Aorta (tissue), 5 donors: ENCODE measurements at regions of chr6 and their contacts with region 1.

Region 1: GRCh38 chr6:28218271-28219248 is 6.5 kb upstream of the ZSCAN9 start:
- DNase-seq: peak; percentile 88 to 93
- ATAC-seq: peak; percentile 85
- H3K4me3 ChIP-seq: peak overlapping the region; percentile 72 to 86
- H3K27ac ChIP-seq: no peak overlapping the region
- H3K4me1 ChIP-seq: no peaks in the 10 kb centered on the region
- H3K27me3 ChIP-seq: no peaks in the 10 kb centered on the region

Region 2: GRCh38 chr6:28136585-28137504 is 81.7 kb before region 1 on chr6:
- intact Hi-C with region 1: loop called (anchors 5 to 10 kb)
- DNase-seq: peak; percentile 94 to 96
- ATAC-seq: peak; percentile 94
- H3K4me3 ChIP-seq: peak overlapping the region; percentile 88 to 91
- H3K27ac ChIP-seq: peak overlapping the region; percentile 91 to 99
- H3K4me1 ChIP-seq: no peaks in the 10 kb centered on the region
- H3K27me3 ChIP-seq: no peaks in the 10 kb centered on the region

Region 3: GRCh38 chr6:28252009-28252975 is 33.7 kb after region 1 on chr6 and contains the start of gene ZKSCAN4:
- intact Hi-C with region 1: loop called in 1 of 2 experiments (anchors 5 kb)
- DNase-seq: peak; percentile 84 to 85
- ATAC-seq: peak; percentile 95
- H3K4me3 ChIP-seq: peak within 1 kb of the TSS; percentile 87 to 98
- H3K27ac ChIP-seq: no peak within 1 kb of the TSS
- H3K4me1 ChIP-seq: no peaks in the 10 kb centered on the region
- H3K27me3 ChIP-seq: no peaks in the 10 kb centered on the region
- total RNA-seq, gene ZKSCAN4: 4.0 to 6.8 TPM

Region 4: DNA sequence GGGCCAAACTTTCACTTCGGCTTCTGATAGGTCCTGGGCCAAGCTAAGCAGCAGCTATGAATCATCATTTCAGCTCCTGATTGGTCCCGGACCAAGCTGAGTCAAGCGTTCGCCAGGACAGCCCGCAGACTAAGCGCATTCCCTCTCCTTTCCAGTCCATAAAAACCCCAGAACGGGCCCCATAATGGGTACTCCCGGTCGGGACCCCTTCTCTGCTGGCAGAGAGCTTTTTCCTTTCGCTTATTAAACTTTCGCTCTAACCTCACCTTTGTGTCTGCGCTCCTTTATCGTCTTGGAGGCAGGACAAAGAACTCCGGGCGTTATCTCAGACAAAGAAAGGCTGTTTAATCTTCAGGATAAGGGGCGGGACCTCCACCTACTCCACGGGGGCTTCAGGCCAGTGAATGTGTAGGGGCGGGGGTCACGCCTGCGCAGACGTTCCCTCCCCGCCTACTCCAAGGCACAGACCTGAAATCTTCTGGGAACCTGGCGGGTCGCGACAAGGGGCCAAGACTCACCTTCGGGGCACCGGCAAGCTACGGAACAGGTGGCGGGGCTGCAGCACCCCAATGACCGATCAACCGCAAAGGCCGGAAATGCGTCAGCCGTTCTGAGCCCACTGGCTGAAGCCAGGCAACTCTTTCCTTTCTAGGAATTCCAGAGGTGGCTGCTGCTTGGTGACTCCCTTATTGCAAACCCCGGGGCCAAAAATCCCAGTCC is 117.2 kb after region 1 on chr6 and contains the start of gene ZSCAN31:
- intact Hi-C with region 1: loop called in 1 of 2 experiments (anchors 5 kb)
- DNase-seq: peak; percentile 96 to 98
- ATAC-seq: peak; percentile 98
- H3K4me3 ChIP-seq: peak within 1 kb of the TSS; percentile 82 to 84
- H3K27ac ChIP-seq: peak within 1 kb of the TSS; percentile 92 to 95
- H3K4me1 ChIP-seq: no peaks in the 10 kb centered on the region
- H3K27me3 ChIP-seq: no peaks in the 10 kb centered on the region
- total RNA-seq, gene ZSCAN31: 8.3 to 10.9 TPM